MCF 10A (cell line): ENCODE measurements at regions of chr1 and their contacts with region 1.

Region 1: DNA sequence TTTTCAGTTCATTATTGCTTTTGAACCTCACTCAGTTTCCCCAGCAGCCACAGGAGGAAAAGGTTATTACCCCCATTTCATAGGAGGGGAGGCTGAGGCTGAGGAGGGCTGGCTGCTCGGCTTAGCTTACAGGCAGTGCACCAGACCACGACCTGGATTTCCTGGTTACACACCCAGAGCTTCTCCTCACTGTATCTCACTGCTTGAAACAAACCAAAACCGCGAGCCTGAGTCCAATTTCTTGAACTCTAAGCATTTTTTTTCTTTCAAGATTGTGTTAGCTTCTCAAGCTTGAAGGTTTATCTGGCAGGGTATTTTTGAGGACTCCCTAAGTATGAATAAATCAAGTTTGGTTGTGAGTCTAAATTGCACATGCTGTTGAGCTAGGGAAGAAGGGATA is 188.9 kb upstream of the EDN2 start:
- DNase-seq: no peak
- H3K4me3 Mint-ChIP-seq: no peak overlapping the region
- H3K27ac Mint-ChIP-seq: peak overlapping the region; percentile 97
- H3K4me1 Mint-ChIP-seq: peaks cover 47% of the 10 kb centered on the region
- H3K27me3 Mint-ChIP-seq: no peaks in the 10 kb centered on the region
- CTCF ChIP-seq: no peak

Region 2: GRCh38 chr1:41662061-41662764 is 11.2 kb before region 1 on chr1:
- CTCF ChIA-PET with region 1: interaction called, 3 read pairs
- POLR2A ChIA-PET with region 1: interaction called, 40 read pairs
- intact Hi-C with region 1: no loop called
- DNase-seq: peak; percentile 51
- H3K4me3 Mint-ChIP-seq: peak overlapping the region; percentile 81
- H3K27ac Mint-ChIP-seq: no peak overlapping the region
- H3K4me1 Mint-ChIP-seq: peaks cover 50% of the 10 kb centered on the region
- H3K27me3 Mint-ChIP-seq: peaks cover 12% of the 10 kb centered on the region
- CTCF ChIP-seq: no peak

Region 3: DNA sequence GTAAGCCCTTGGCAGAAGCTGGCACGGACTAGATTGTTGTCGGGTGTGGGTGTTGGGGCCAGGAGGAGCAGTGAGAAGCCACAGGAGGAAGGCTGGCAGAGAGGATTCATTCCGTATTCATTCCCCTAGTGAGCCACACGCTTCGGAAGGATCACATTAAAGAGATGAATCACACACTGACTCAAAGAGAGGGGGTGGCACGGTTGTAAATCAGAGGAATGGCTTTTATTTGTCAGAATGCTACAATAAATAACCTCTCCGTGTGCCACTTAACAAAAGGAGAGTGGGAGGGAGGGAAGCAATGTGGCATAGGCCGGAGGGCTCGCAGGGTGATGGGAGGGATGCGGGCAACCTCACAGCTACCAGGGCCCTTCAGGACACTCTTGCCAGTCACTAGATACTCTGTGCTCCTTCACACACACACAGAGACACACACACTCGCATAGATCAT is 109.8 kb after region 1 on chr1:
- CTCF ChIA-PET with region 1: no interaction called
- POLR2A ChIA-PET with region 1: no interaction called
- intact Hi-C with region 1: loop called (anchors 5 kb)
- DNase-seq: peak; percentile 90
- H3K4me3 Mint-ChIP-seq: peak overlapping the region; percentile 27
- H3K27ac Mint-ChIP-seq: peak overlapping the region; percentile 86
- H3K4me1 Mint-ChIP-seq: peaks cover 23% of the 10 kb centered on the region
- H3K27me3 Mint-ChIP-seq: no peaks in the 10 kb centered on the region
- CTCF ChIP-seq: no peak